GM12878 (cell line): ENCODE measurements at regions of chr6 and their contacts with region 1.

Region 1: GRCh38 chr6:43086022-43086658 is 10.0 kb downstream of the PTK7 start:
- DNase-seq: peak; percentile 47
- ATAC-seq: peak; percentile 94
- H3K4me3 ChIP-seq: no peak overlapping the region
- H3K27ac ChIP-seq: peak overlapping the region; percentile 23; the same call in 1 of the 2 replicates
- H3K4me1 ChIP-seq: peaks cover 12% of the 10 kb centered on the region
- H3K27me3 ChIP-seq: no peaks in the 10 kb centered on the region; a peak in 1 of 4 replicates
- CTCF ChIP-seq: no peak
- EP300 ChIP-seq: no peak
- POLR2A ChIP-seq: no peak
- RAD21 ChIP-seq: no peak

Region 2: GRCh38 chr6:43021270-43022047 is 64.7 kb before region 1 on chr6 and contains the start of gene RRP36:
- CTCF ChIA-PET with region 1: no interaction called
- POLR2A ChIA-PET with region 1: no interaction called
- RAD21 ChIA-PET with region 1: no interaction called
- SMC1A ChIA-PET with region 1: no interaction called
- in situ Hi-C with region 1: no loop called
- intact Hi-C with region 1: no loop called
- DNase-seq: no peak
- ATAC-seq: peak; percentile 98
- H3K4me3 ChIP-seq: peak within 1 kb of the TSS; percentile 100
- H3K27ac ChIP-seq: peak within 1 kb of the TSS; percentile 77
- H3K4me1 ChIP-seq: peaks cover 14% of the 10 kb centered on the region
- H3K27me3 ChIP-seq: no peaks in the 10 kb centered on the region
- CTCF ChIP-seq: no peak
- EP300 ChIP-seq: no peak
- POLR2A ChIP-seq: peak; percentile 83
- RAD21 ChIP-seq: no peak
- polyA plus RNA-seq, gene RRP36: 17.6 to 34.7 TPM

Region 3: GRCh38 chr6:43096451-43097097 is 10.4 kb after region 1 on chr6:
- CTCF ChIA-PET with region 1: interaction called, 5 read pairs
- POLR2A ChIA-PET with region 1: interaction called, 12 read pairs
- RAD21 ChIA-PET with region 1: interaction called, 12 read pairs
- SMC1A ChIA-PET with region 1: interaction called, 20 read pairs
- in situ Hi-C with region 1: no loop called
- intact Hi-C with region 1: no loop called
- DNase-seq: no peak
- ATAC-seq: peak; percentile 72
- H3K4me3 ChIP-seq: peak overlapping the region; percentile 9; the same call in 1 of the 2 replicates
- H3K27ac ChIP-seq: peak overlapping the region; percentile 57
- H3K4me1 ChIP-seq: peaks cover 19% of the 10 kb centered on the region
- H3K27me3 ChIP-seq: no peaks in the 10 kb centered on the region
- CTCF ChIP-seq: no peak
- EP300 ChIP-seq: no peak
- POLR2A ChIP-seq: peak; percentile 81
- RAD21 ChIP-seq: no peak